ENCODE measurements at regions of chr7 and their contacts with region 1.

Region 1: DNA sequence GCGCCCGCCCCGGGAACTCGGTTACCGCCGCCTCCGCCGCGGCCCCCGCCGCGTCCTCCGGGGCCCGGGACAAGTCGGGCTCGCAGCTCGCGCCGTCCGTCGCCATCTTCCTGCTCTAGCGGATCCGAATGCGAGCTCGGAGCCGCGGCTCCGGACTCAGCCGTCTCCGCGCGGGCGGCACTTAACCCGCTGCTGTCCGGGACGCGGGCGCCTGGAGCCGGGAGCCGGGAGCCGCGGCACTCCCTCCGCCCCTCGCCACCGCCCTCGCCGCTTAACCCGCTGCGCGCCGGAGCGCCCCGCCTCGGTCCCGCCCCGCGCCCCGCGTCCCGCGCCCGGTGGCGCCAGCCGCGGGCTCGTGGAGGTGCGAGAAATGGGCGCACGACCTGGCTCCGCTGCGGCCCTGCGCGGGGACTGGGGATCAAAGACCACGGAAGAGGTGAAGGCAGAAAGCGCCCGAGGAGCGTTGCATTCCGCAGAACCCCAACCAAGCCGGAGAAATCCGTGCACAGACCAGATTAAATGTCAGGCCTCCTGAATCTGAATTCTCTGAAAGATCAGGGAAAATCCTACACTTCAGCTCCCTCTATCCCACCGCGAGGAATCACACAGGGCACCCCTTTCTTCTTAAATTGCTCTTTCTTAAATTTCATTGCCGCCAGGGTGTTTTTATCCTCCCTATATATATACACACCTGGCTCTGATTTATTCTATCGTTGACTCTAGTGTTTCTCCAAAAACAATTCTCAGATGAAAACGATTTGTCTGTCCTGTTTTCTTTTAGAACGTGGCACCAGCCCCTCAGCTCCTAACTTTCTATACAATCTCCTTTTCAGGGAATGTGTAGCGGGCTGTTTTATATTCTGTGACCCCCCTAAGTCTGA is at the start of gene CTTNBP2:
- DNase-seq: peak in 1 of 2 donors; percentile 77
- H3K4me3 ChIP-seq: peak within 1 kb of the TSS; percentile 82 to 91
- H3K27ac ChIP-seq: peak within 1 kb of the TSS; percentile 10 to 14
- H3K4me1 ChIP-seq: peaks cover 0 to 3% of the 10 kb centered on the region in 2 donors
- H3K27me3 ChIP-seq: no peaks in the 10 kb centered on the region
- CTCF ChIP-seq: no peak
- total RNA-seq, gene CTTNBP2: 3.0 TPM

Region 2: GRCh38 chr7:117750612-117751563 is 122.7 kb before region 1 on chr7:
- intact Hi-C with region 1: loop called (anchors 5 kb)
- DNase-seq: no peak
- H3K4me3 ChIP-seq: no peak overlapping the region
- H3K27ac ChIP-seq: no peak overlapping the region
- H3K4me1 ChIP-seq: no peaks in the 10 kb centered on the region
- H3K27me3 ChIP-seq: no peaks in the 10 kb centered on the region
- CTCF ChIP-seq: peak; percentile 21 to 53 (median 31)

Region 3: DNA sequence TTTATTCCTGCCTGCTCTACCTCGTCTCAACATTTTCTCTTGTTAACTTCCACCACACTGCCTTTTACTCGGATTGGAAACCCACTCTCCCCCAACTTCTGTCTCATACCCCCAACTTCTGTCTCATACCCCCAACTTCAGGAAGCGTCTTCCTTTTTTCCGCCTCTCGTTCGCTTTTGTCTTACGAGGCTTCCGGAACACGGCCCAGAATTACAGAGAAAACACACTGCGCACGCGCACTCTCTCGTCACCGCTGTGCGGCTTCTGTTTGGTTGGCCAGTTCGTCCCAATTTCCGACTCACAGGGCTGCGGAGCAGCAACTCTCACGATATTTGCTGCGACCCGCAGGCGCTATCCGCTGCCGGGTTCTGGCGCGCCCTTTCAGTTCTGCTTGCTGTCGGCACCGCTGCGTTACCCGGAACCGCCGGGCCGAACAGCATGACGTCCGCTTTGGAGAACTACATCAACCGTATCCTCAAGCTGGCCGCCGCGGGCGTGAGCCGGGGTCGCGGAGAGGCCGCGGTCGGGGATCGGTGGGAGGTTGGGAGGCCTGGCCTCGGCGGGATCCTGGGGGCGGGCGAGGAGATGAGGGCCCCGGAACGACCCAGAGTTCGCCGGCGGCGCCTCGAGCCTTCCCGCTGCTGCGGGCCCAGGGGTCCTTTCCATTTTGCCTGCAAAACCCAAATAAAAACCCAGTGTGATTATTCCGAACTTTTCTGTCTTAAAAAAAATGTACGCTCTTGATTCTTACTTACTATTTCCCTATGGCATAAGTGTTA is 310.4 kb after region 1 on chr7 and contains the start of gene LSM8:
- intact Hi-C with region 1: loop called (anchors 5 kb)
- DNase-seq: peak; percentile 93 to 99
- H3K4me3 ChIP-seq: peak within 1 kb of the TSS; percentile 76 to 81
- H3K27ac ChIP-seq: peak within 1 kb of the TSS; percentile 84 to 88
- H3K4me1 ChIP-seq: peaks cover 0 to 22% of the 10 kb centered on the region in 2 donors
- H3K27me3 ChIP-seq: no peaks in the 10 kb centered on the region
- CTCF ChIP-seq: no peak
- total RNA-seq, gene LSM8: 7.9 TPM

Measured in ascending aorta (tissue), 2 donors.